Activated CD4-positive, alpha-beta memory T cell treated with anti-CD3 and anti-CD28 coated beads, Interleukin-2, amount 10 ng/mL, durations not matched to agents 7 days and 5 days (primary cell): ENCODE measurements at regions of chr3 and their contacts with region 1.

Region 1: DNA sequence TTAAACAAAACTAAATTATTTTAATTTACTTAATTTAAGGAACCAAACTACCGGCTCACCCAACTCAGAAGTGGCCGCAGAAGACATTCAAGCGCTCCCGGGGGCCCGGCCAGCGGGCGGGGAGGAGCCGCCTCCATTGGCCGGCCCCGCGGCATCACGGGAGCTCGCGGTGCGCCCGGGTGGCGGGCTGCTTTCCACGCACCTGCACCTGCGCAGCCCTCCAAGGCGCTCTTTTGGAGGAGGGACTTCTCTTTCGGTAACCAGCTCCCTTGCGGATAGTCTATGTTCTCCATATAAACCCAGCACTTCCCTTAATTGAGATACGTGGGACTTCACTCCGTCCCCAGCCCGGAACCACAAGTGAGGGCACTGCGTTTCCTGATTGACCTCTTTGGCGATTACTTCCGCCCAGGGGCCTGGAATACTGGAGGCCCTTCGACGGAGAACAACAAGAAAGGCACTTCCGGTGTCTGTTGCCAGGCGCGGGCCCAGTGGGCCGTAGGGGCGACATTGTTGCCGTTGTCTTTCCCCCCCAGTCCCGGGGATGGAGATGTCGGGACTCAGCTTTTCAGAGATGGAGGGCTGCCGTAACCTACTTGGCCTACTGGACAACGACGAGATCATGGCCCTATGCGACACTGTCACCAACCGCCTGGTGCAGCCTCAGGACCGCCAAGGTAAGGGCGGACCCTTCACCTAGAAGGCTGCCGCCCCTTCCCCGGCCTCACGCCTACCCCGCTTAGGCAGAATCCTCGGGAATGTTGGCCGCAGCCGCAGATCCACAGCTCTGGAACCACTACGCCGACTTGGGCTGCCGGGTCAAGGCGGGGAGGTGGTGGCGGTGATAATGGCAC is at the start of gene C3orf38:
- DNase-seq: peak; percentile 86
- H3K4me3 Mint-ChIP-seq: peak within 1 kb of the TSS; percentile 96
- H3K27ac Mint-ChIP-seq: peak within 1 kb of the TSS; percentile 97
- H3K4me1 Mint-ChIP-seq: peaks cover 44% of the 10 kb centered on the region
- H3K27me3 Mint-ChIP-seq: no peaks in the 10 kb centered on the region
- total RNA-seq, gene C3orf38: 32.6 to 36.5 TPM

Region 2: DNA sequence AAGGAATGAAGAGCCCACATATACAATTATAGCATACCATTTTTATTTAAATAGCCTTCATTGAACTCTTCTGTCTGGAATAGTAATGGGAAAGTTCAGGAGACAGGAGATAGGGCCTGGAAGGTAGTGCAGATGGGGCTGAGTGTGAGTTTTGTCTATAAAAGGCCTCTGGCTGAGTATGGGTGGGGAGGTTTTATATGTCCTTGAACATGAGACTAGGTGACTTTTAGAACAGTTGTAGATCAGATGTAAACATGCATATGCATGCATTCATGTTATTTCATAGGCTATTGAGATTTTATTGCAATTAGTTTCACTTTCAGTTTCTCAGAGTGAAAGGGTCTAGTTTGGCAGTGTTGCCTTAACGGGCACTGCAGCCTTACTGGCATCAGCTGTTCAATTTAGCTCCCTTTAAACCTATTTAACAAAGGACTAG is 118.1 kb before region 1 on chr3:
- CTCF ChIA-PET with region 1: interaction called, 3 read pairs
- POLR2A ChIA-PET with region 1: interaction called, 25 read pairs
- DNase-seq: peak; percentile 25
- H3K4me3 Mint-ChIP-seq: peak overlapping the region; percentile 89
- H3K27ac Mint-ChIP-seq: peak overlapping the region; percentile 87
- H3K4me1 Mint-ChIP-seq: peaks cover 32% of the 10 kb centered on the region
- H3K27me3 Mint-ChIP-seq: no peaks in the 10 kb centered on the region

Region 3: DNA sequence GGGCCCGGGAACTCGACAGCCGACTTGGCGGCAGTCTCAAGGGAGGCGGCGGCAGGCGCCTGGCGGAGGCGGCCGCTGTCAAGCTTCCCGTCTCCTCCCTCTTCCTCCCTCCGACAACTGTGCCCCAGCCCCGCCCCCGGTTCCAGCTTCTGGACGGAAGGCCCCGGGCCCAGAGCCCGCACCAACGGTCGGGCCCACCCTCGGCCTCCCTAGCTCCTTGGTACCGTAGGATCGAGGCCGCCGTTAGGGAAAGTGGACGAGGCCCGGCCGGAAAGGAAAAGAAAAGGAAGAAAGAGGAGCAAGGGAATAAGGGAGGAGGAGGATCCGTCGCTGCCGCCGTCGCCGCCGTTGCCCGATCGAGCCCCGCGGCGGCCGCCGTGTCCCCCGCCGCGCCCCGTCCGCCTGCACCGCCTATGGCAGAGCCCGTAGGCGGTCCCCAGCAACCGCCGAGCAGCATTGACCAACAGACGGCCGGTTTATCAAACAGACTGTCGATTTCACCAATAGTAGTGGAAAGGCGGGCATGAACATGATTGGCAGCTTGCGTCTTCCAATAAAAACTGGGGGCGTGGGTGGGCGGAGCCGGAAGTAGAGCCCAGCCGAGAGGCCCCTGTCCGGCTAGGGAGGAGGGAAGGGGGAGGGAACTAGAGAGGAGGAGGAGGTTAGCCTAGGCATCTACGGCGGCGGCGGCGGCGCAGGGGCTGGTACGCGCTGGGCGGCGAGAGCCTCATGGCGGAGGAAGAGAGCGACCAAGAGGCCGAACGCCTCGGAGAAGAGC is 91.0 kb before region 1 on chr3 and contains the starts of genes CGGBP1 and ZNF654:
- CTCF ChIA-PET with region 1: interaction called, 12 read pairs
- POLR2A ChIA-PET with region 1: interaction called, 130 read pairs
- DNase-seq: peak; percentile 99
- H3K4me3 Mint-ChIP-seq: peak within 1 kb of the TSS; percentile 99
- H3K27ac Mint-ChIP-seq: peak within 1 kb of the TSS; percentile 95
- H3K4me1 Mint-ChIP-seq: peaks cover 51% of the 10 kb centered on the region
- H3K27me3 Mint-ChIP-seq: no peaks in the 10 kb centered on the region
- total RNA-seq, gene CGGBP1: 105 to 118 TPM
- total RNA-seq, gene ZNF654: 26.5 to 27.4 TPM

Region 4: DNA sequence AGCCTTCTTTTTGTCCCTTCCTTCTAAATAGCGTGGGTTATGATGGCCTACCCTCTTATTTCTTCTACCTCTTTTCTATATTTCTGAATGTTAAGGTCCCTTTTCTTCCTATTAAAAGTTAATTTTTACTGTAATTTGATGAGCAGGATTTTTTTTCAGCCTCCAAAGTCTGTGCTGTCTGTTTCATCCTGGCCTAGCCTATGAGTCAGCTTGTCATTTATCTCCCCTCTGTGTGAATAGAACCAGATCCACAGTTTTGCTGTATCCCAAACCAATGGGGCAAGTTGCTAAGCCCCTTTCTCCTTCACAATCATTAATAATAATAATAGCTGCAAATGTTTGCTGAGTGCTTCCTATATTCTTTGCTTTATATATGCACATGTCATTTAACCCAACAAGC is 18.0 kb before region 1 on chr3:
- CTCF ChIA-PET with region 1: interaction called, 6 read pairs
- POLR2A ChIA-PET with region 1: interaction called, 20 read pairs
- DNase-seq: no peak
- H3K4me3 Mint-ChIP-seq: no peak overlapping the region
- H3K27ac Mint-ChIP-seq: no peak overlapping the region
- H3K4me1 Mint-ChIP-seq: peaks cover 2% of the 10 kb centered on the region
- H3K27me3 Mint-ChIP-seq: no peaks in the 10 kb centered on the region

Region 5: DNA sequence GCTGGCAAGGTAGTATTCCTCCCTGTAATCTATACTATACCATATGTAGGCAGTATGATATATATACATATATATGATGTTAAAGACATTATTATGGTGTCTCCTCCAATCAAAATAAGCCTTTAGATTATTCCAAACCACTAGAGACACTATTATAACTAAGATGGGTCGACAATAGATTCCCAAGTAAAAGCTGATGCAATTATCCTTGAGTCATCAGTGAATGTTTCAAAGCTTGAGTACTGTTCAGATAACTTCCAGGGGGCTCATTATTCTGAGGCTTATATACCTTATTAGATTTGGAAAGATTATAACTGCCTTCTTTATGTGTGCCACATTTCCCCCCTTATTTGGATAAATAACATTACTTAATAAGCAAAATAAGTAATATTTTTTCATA is 11.9 kb before region 1 on chr3:
- CTCF ChIA-PET with region 1: interaction called, 6 read pairs
- POLR2A ChIA-PET with region 1: interaction called, 20 read pairs
- DNase-seq: no peak
- H3K4me3 Mint-ChIP-seq: no peak overlapping the region
- H3K27ac Mint-ChIP-seq: no peak overlapping the region
- H3K4me1 Mint-ChIP-seq: peaks cover 14% of the 10 kb centered on the region
- H3K27me3 Mint-ChIP-seq: no peaks in the 10 kb centered on the region

Region 6: GRCh38 chr3:88291486-88291885 is 141.8 kb after region 1 on chr3:
- CTCF ChIA-PET with region 1: no interaction called
- POLR2A ChIA-PET with region 1: no interaction called
- DNase-seq: no peak
- H3K4me3 Mint-ChIP-seq: no peak overlapping the region
- H3K27ac Mint-ChIP-seq: no peak overlapping the region
- H3K4me1 Mint-ChIP-seq: no peaks in the 10 kb centered on the region
- H3K27me3 Mint-ChIP-seq: no peaks in the 10 kb centered on the region